Naive thymus-derived CD4-positive, alpha-beta T cell (primary cell): ENCODE measurements at regions of chr19 and their contacts with region 1.

Region 1: DNA sequence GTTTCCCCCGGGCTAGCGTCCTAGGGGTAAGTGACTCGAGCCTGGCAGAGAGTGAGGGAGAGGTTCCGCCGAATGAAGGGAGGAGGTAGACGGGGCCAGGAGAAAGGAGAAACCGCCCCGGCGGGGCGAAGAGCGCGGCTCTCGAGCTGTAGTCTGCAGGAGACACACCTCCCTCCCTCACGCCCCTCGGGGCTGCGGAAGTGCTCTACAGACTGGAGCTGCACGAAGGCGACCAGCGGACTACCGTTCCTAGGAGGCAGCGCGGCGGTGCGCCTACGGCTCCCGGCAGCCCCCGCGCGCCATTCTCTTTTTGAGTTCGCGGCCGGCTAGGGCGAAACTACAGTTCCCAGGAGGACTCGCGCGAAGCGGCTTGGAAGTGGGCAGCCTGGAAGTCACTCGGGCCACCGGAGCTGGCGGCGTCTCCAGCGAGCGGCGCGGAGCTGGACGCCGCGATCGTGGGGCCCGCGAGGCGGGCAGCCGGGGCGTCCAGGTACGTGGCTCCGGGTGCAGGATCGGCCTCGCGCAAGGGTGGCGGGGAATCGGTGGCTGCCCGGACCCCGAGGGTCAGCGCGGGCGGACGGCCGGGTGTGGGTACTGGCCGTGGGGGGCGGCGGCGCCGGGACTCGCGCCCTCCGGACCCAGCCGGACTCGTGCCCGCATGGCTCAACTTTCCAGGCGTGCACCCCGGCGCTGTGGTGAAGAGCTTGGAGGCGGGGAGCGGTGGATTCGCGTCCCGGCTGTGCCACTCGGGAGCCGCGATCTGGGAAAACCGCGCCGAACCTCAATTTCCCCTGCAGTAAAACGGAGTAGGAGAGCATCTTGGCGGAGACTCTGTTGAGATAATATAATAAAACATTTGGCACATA is at the start of gene SIPA1L3:
- DNase-seq: peak; percentile 77 to 91 (median 89)
- ATAC-seq: peak; percentile 99
- H3K4me3 ChIP-seq: peak within 1 kb of the TSS; percentile 99
- H3K4me3 Mint-ChIP-seq: peak within 1 kb of the TSS; percentile 69 to 96 (median 90)
- H3K27ac ChIP-seq: peak within 1 kb of the TSS; percentile 89
- H3K27ac Mint-ChIP-seq: peak within 1 kb of the TSS; percentile 67 to 95 (median 90)
- H3K4me1 ChIP-seq: peaks cover 6 to 9% of the 10 kb centered on the region in 2 donors
- H3K4me1 Mint-ChIP-seq: peaks cover 24 to 39% (median 35%) of the 10 kb centered on the region in 7 donors
- H3K27me3 ChIP-seq: no peaks in the 10 kb centered on the region
- H3K27me3 Mint-ChIP-seq: peaks cover 0 to 2% (median 0%) of the 10 kb centered on the region in 5 donors
- total RNA-seq, gene SIPA1L3: 17.4 to 38.7 (median 34.8) TPM

Region 2: GRCh38 chr19:36687214-36688056 is 1219.7 kb before region 1 on chr19 and contains the start of gene ZNF567:
- CTCF ChIA-PET with region 1: no interaction called
- POLR2A ChIA-PET with region 1: no interaction called
- intact Hi-C with region 1: loop called in 1 of 2 experiments (anchors 5 kb)
- DNase-seq: peak; percentile 90 to 99 (median 93)
- ATAC-seq: peak; percentile 97
- H3K4me3 ChIP-seq: peak within 1 kb of the TSS; percentile 85
- H3K4me3 Mint-ChIP-seq: peak within 1 kb of the TSS; percentile 94 to 100 (median 98)
- H3K27ac ChIP-seq: peak within 1 kb of the TSS; percentile 86
- H3K27ac Mint-ChIP-seq: peak within 1 kb of the TSS; percentile 92 to 97 (median 95)
- H3K4me1 ChIP-seq: peaks cover 13 to 22% of the 10 kb centered on the region in 2 donors
- H3K4me1 Mint-ChIP-seq: peaks cover 26 to 49% (median 40%) of the 10 kb centered on the region in 7 donors
- H3K27me3 ChIP-seq: no peaks in the 10 kb centered on the region
- H3K27me3 Mint-ChIP-seq: peaks cover 0 to 5% (median 0%) of the 10 kb centered on the region in 5 donors
- total RNA-seq, gene ZNF567: 7.0 to 18.3 (median 9.3) TPM

Region 3: DNA sequence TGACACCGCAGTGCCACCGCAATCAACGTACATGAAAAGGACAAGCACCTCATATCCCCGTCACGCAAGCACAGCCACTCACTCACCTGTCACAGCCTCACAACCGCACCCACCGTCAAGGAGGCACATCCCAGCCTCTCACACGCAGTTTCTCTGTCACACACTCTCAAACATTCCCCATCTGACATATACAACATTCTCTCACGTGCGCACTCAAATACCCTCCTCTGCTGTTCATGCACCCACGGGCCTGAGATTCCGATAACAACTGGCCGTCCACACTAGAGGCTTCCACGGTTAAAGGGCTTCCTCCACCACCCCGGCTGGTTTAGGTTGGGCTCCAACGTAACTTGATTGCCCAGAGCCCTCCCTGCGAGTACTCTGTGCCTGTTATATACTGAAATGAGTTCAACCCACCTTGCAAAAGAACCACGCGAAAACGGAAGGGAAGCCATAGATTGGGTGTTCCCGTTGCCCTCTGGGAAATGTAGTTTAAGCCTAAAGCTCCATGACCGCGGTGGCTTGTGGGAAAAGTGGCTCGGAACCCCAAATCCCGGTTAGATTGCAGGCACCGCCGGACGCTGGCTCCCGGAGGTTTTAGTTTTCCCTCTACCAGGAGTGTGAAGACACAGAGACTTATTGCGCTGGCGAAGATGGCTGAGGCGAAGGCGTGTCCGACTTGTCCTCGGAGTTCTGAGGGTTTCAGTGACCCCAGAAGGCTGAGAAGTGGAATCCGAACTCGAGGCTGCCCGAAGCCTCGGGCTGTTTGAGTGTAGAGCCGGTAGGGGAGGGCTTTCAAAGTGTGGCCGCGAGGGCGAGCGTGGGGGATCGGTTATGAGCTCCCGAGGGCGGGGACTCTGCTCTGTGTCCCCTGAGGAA is 127.7 kb before region 1 on chr19 and contains the start of gene ZNF573:
- CTCF ChIA-PET with region 1: no interaction called
- POLR2A ChIA-PET with region 1: no interaction called
- intact Hi-C with region 1: loop called in 1 of 2 experiments (anchors 2 kb)
- DNase-seq: peak; percentile 62 to 99 (median 94)
- ATAC-seq: peak; percentile 94
- H3K4me3 ChIP-seq: peak within 1 kb of the TSS; percentile 82
- H3K4me3 Mint-ChIP-seq: peak within 1 kb of the TSS; percentile 91 to 98 (median 96)
- H3K27ac ChIP-seq: peak within 1 kb of the TSS; percentile 99
- H3K27ac Mint-ChIP-seq: peak within 1 kb of the TSS; percentile 89 to 100 (median 98)
- H3K4me1 ChIP-seq: peaks cover 6% of the 10 kb centered on the region in 2 donors
- H3K4me1 Mint-ChIP-seq: peaks cover 9 to 53% (median 48%) of the 10 kb centered on the region in 7 donors
- H3K27me3 ChIP-seq: no peaks in the 10 kb centered on the region
- H3K27me3 Mint-ChIP-seq: no peaks in the 10 kb centered on the region
- total RNA-seq, gene ZNF573: 5.9 to 43.8 (median 16.6) TPM

Region 4: GRCh38 chr19:38142176-38143035 is 235.3 kb after region 1 on chr19:
- CTCF ChIA-PET with region 1: no interaction called
- POLR2A ChIA-PET with region 1: no interaction called
- intact Hi-C with region 1: loop called (anchors 2 kb)
- DNase-seq: peak in 3 of 9 donors; percentile 13 to 46 (median 16)
- ATAC-seq: peak; percentile 56
- H3K4me3 ChIP-seq: no peak overlapping the region
- H3K4me3 Mint-ChIP-seq: no peak overlapping the region
- H3K27ac ChIP-seq: no peak overlapping the region
- H3K27ac Mint-ChIP-seq: peak overlapping the region in 1 of 9 donors; percentile 63
- H3K4me1 ChIP-seq: no peaks in the 10 kb centered on the region
- H3K4me1 Mint-ChIP-seq: peaks cover 0 to 7% (median 0%) of the 10 kb centered on the region in 7 donors
- H3K27me3 ChIP-seq: no peaks in the 10 kb centered on the region
- H3K27me3 Mint-ChIP-seq: no peaks in the 10 kb centered on the region

Region 5: GRCh38 chr19:38245826-38246498 is 338.9 kb after region 1 on chr19:
- CTCF ChIA-PET with region 1: interaction called, 4 read pairs
- POLR2A ChIA-PET with region 1: no interaction called
- intact Hi-C with region 1: loop called in 1 of 2 experiments (anchors 1 kb)
- DNase-seq: no peak
- ATAC-seq: no peak
- H3K4me3 ChIP-seq: no peak overlapping the region
- H3K4me3 Mint-ChIP-seq: no peak overlapping the region
- H3K27ac ChIP-seq: no peak overlapping the region
- H3K27ac Mint-ChIP-seq: peak overlapping the region in 1 of 9 donors; percentile 33
- H3K4me1 ChIP-seq: peaks cover 0 to 3% of the 10 kb centered on the region in 2 donors
- H3K4me1 Mint-ChIP-seq: peaks cover 4 to 14% (median 5%) of the 10 kb centered on the region in 7 donors
- H3K27me3 ChIP-seq: no peaks in the 10 kb centered on the region
- H3K27me3 Mint-ChIP-seq: peaks cover 0 to 5% (median 0%) of the 10 kb centered on the region in 5 donors

Region 6: GRCh38 chr19:38335949-38336637 is 429.0 kb after region 1 on chr19:
- CTCF ChIA-PET with region 1: interaction called, 3 read pairs
- POLR2A ChIA-PET with region 1: interaction called, 11 read pairs
- intact Hi-C with region 1: loop called (anchors 1 kb)
- DNase-seq: peak; percentile 86 to 94 (median 93)
- ATAC-seq: peak; percentile 77
- H3K4me3 ChIP-seq: peak overlapping the region; percentile 92
- H3K4me3 Mint-ChIP-seq: peak overlapping the region; percentile 92 to 100 (median 96)
- H3K27ac ChIP-seq: peak overlapping the region; percentile 86
- H3K27ac Mint-ChIP-seq: peak overlapping the region; percentile 91 to 100 (median 97)
- H3K4me1 ChIP-seq: peaks cover 3 to 5% of the 10 kb centered on the region in 2 donors
- H3K4me1 Mint-ChIP-seq: peaks cover 16 to 28% (median 17%) of the 10 kb centered on the region in 7 donors
- H3K27me3 ChIP-seq: no peaks in the 10 kb centered on the region
- H3K27me3 Mint-ChIP-seq: no peaks in the 10 kb centered on the region